ENCODE measurements at regions of chr10 and their contacts with region 1.

Region 1: DNA sequence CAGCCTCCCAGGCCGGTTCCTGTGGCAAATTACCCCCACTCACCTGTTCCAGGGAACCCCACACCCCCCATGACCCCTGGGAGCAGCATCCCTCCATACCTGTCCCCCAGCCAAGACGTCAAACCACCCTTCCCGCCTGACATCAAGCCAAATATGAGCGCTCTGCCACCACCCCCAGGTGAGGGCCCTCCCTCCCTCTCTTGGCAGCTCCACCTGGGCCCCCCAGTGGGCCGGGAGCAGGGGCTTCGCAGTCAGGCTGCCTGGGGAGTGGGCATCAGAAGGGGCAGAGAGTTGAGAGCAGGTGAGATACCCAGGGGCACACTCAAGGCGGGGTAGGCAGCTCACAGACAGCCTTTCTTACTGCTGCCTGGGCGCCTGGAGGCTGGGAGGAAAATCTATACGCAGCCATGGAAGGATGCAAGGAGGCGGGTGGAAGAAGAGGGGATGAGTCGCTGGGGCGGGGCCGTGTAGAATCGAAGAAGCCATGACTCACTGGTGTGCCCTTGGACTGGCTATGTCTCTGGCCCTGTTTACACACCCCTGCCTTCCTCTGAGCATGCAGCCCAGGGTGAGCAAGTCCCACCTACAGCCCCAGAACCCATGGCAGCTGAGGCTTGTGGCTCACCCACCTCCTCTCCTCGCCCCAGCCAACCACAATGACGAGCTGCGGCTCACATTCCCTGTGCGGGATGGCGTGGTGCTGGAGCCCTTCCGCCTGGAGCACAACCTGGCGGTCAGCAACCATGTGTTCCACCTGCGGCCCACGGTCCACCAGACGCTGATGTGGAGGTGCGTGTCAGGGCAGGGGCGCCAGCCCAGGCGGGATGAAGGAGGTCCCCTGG is 48.6 kb upstream of the PPIF start:
- DNase-seq: peak; percentile 70
- H3K4me3 Mint-ChIP-seq: peak overlapping the region; percentile 8
- H3K27ac Mint-ChIP-seq: peak overlapping the region; percentile 73
- H3K4me1 Mint-ChIP-seq: peaks cover 35% of the 10 kb centered on the region
- H3K27me3 Mint-ChIP-seq: no peaks in the 10 kb centered on the region

Region 2: DNA sequence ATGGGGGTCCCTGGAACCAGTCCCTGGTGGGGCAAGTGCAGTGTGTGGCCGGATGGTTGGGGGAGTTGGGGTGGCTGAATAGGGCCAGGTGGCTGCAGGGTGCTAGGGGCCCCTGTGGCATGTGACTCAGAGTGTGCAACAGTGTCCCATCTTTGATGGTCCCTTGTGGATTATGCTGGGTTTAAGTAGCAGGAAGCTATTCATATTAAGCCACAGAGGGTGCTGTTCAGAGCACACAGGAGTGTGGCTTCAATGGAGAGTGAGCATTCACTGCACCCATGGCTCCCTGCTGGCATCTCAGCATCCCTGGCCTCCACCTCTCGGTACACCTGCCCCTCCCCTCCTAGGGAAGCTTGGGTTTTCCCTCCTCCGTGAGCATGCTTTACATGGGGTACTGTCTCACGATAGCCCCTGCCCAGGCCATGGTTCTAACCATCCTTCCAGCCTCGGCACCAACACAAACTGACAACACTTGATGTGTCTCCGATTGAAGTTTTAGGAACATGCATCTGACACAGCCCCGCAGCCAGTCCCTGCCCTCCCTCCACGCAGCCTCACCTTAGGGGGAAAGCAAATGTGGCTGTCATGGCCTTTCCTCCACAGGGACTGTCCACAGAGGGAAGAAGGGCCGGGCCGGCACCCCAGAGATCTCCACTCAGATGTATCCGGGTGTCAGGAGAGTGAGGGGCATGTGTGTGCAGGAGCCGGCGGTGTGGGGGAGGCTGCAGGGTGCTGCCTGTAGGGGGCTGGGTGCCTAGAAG is 18.2 kb after region 1 on chr10:
- intact Hi-C with region 1: loop called (anchors 2 kb)
- DNase-seq: peak; percentile 75
- H3K4me3 Mint-ChIP-seq: peak overlapping the region; percentile 76
- H3K27ac Mint-ChIP-seq: peak overlapping the region; percentile 90
- H3K4me1 Mint-ChIP-seq: peaks cover 59% of the 10 kb centered on the region
- H3K27me3 Mint-ChIP-seq: peaks cover 3% of the 10 kb centered on the region

Region 3: GRCh38 chr10:79331709-79332108 is 33.1 kb after region 1 on chr10:
- intact Hi-C with region 1: loop called (anchors 1 kb)
- DNase-seq: peak; percentile 95
- H3K4me3 Mint-ChIP-seq: peak overlapping the region; percentile 56
- H3K27ac Mint-ChIP-seq: peak overlapping the region; percentile 95
- H3K4me1 Mint-ChIP-seq: peaks cover 57% of the 10 kb centered on the region
- H3K27me3 Mint-ChIP-seq: no peaks in the 10 kb centered on the region

Region 4: GRCh38 chr10:79367426-79368189 is 69.0 kb after region 1 on chr10:
- intact Hi-C with region 1: no loop called
- DNase-seq: no peak
- H3K4me3 Mint-ChIP-seq: no peak overlapping the region
- H3K27ac Mint-ChIP-seq: no peak overlapping the region
- H3K4me1 Mint-ChIP-seq: no peaks in the 10 kb centered on the region
- H3K27me3 Mint-ChIP-seq: peaks cover 49% of the 10 kb centered on the region

Region 5: DNA sequence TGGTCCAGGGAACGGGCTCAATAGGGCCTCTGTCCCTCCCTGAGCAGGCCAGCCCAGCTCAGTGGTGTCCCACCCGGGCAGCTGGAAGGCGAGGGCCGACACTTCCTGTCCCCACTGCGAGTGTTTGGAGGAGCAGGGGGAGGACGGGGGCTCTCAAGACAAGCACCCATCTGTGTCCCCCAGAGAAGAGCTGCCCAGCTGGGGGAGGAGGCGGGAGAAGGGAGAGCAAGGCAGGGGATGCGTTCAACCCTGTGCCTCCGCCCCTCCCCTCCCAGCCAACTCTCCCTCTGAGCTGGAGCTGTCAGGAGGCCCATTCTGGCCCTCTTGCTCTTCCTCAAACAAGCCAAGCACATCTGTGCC is 111.1 kb after region 1 on chr10:
- intact Hi-C with region 1: no loop called
- DNase-seq: no peak
- H3K4me3 Mint-ChIP-seq: no peak overlapping the region
- H3K27ac Mint-ChIP-seq: no peak overlapping the region
- H3K4me1 Mint-ChIP-seq: peaks cover 6% of the 10 kb centered on the region
- H3K27me3 Mint-ChIP-seq: peaks cover 2% of the 10 kb centered on the region

Measured in activated CD4-positive, alpha-beta T cell treated with anti-CD3 and anti-CD28 coated beads, Interleukin-2, amount 10 ng/mL, durations not matched to agents 24 days and 14 days (primary cell).